Heart right ventricle (tissue), 16 donors: ENCODE measurements at regions of chr1 and their contacts with region 1.

Region 1: DNA sequence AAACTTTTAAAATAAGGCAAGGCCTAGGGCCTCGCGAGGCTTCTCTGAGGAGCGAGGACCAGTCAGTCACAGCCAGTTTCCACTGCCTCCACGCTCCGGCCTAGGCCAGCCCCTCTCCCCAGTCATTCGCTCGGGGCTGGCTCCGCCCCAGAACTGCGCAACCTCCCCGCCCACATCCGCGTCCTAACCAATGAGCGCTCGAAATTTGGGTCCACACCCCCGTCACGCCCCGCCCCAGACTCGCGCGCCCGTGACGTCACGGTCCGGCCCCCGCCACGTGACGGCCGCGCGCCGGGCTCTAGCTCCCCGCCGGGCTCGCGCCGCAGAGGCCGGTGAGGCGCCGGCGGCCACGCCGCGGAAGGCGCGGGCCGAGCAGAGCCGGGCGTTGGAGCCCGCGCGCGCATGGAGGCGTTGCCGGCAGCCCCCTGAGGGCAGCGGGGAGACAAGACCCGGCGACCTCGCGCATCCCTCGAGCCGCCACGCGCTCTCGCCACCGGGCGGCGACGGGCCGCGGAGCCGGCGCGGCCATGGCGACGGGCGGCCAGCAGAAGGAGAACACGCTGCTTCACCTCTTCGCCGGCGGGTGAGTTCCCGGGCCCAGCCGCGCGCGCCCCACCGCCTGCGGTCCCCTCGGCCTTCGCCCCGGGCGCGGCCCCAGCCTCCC is at the start of gene SLC25A33:
- DNase-seq: peak; percentile 98
- ATAC-seq: peak; percentile 98 to 100 (median 99)
- H3K4me3 ChIP-seq: peak within 1 kb of the TSS; percentile 56 to 92 (median 82)
- H3K27ac ChIP-seq: peak within 1 kb of the TSS; percentile 32 to 95 (median 86)
- H3K4me1 ChIP-seq: peaks cover 5 to 42% (median 29%) of the 10 kb centered on the region in 9 donors
- H3K27me3 ChIP-seq: no peaks in the 10 kb centered on the region
- CTCF ChIP-seq: no peak
- total RNA-seq, gene SLC25A33: 2.8 to 7.7 (median 5.4) TPM

Region 2: DNA sequence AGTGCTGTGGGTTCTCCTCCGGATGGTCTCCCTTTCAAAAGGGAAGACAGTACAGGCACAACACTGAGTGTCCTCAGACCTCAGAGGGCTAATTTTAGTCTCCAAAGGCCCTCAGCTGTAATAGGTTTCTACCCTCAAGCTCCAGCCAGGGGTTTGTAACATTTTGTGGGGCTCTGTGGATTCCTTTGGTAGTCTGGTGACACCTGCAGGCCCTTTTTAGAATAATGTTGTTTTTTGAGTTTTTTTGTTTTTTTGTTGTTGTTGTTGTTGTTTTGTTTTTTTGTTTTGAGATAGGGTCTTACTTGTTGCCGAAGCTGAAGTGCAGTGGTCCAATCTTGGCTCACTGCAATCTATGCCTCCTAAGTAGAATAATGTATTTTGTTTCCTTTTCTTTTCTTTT is 34.4 kb after region 1 on chr1:
- intact Hi-C with region 1: loop called in 1 of 10 experiments (anchors 5 kb)
- DNase-seq: no peak
- ATAC-seq: peak in 7 of 8 donors; percentile 49 to 72 (median 62)
- H3K4me3 ChIP-seq: no peak overlapping the region
- H3K27ac ChIP-seq: no peak overlapping the region
- H3K4me1 ChIP-seq: peaks cover 0 to 12% (median 0%) of the 10 kb centered on the region in 9 donors
- H3K27me3 ChIP-seq: no peaks in the 10 kb centered on the region
- CTCF ChIP-seq: peak; percentile 10 to 62 (median 46)

Region 3: DNA sequence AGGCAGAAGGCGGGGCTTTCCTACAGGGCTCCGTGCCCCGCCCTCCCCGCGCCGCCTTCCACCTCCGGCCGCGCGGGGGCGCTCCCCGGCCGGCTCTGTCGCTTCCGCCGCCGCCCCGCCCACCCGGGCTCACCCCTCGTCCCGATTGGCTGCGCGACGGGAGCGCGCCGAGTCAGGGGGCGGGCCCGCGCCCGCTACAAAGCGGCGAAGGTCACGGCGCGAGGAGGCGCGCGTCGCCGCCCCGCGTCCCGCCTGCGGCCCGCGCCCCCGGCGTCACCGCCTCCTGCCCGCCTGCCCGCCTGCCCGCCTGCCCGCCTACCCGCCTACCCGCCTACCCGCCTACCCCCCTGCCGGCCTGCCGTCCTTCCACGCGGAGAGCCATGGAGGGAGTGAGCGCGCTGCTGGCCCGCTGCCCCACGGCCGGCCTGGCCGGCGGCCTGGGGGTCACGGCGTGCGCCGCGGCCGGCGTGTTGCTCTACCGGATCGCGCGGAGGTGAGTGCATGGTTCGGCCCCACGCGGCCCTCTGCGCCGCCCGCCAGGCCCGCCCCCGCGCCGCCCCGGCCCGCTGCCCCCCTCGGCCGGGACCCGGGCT is 49.4 kb after region 1 on chr1 and contains the start of gene TMEM201:
- intact Hi-C with region 1: loop called in 1 of 10 experiments (anchors 2 kb)
- DNase-seq: peak; percentile 93 to 96
- ATAC-seq: peak; percentile 80 to 96 (median 89)
- H3K4me3 ChIP-seq: peak within 1 kb of the TSS; percentile 63 to 96 (median 73)
- H3K27ac ChIP-seq: peak within 1 kb of the TSS in 9 of 10 donors; percentile 48 to 78 (median 64)
- H3K4me1 ChIP-seq: peaks cover 22 to 53% (median 45%) of the 10 kb centered on the region in 9 donors
- H3K27me3 ChIP-seq: no peaks in the 10 kb centered on the region
- CTCF ChIP-seq: peak; percentile 69 to 99 (median 91)
- total RNA-seq, gene TMEM201: 13.3 to 26.0 (median 18.3) TPM